CD4-positive, alpha-beta T cell (primary cell): ENCODE measurements at regions of chr3 and their contacts with region 1.

Region 1: GRCh38 chr3:30693470-30694120 is 87.2 kb downstream of the TGFBR2 start:
- DNase-seq: peak in 10 of 14 experiments; percentile 12 to 83 (median 37)
- ATAC-seq: peak; percentile 94
- H3K4me3 ChIP-seq: no peak overlapping the region
- H3K4me3 Mint-ChIP-seq: no peak overlapping the region
- H3K27ac ChIP-seq: no peak overlapping the region
- H3K27ac Mint-ChIP-seq: peak overlapping the region; percentile 79
- H3K4me1 ChIP-seq: peaks cover 19% of the 10 kb centered on the region
- H3K4me1 Mint-ChIP-seq: peaks cover 86% of the 10 kb centered on the region
- H3K27me3 ChIP-seq: no peaks in the 10 kb centered on the region
- H3K27me3 Mint-ChIP-seq: no peaks in the 10 kb centered on the region
- CTCF ChIP-seq: peak; percentile 90

Region 2: DNA sequence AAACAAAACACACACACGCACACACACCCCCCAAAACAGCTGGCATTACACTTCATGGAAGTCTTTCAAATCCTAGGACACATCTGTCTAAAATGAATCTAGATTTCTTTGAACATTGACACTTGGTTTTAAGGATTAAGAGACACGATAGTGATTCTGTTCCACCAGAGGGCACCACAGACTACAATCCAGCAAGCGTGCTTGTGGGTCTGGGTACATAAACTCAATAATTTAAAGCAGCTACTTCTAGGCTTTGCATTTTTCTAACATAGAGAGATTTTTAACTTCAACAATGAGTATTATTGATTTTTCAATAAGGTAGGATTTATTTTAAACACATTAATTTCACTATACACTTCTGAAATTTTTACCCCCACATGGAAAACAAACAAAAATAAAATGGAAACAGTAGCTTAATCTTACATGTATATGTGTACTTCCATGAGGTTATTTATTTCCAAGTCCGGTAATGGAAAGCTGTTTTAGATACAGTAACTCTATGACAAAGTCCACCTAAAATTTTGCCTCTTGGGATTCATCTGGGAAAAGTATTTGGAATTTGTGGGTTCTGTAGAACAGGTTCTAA is 651.2 kb before region 1 on chr3:
- CTCF ChIA-PET with region 1: interaction called, 5 read pairs
- POLR2A ChIA-PET with region 1: interaction called, 5 read pairs
- intact Hi-C with region 1: loop called in 1 of 2 experiments (anchors 1 kb)
- DNase-seq: peak; percentile 24 to 76 (median 48)
- ATAC-seq: peak; percentile 66
- H3K4me3 ChIP-seq: no peak overlapping the region
- H3K4me3 Mint-ChIP-seq: no peak overlapping the region
- H3K27ac ChIP-seq: no peak overlapping the region
- H3K27ac Mint-ChIP-seq: no peak overlapping the region
- H3K4me1 ChIP-seq: no peaks in the 10 kb centered on the region
- H3K4me1 Mint-ChIP-seq: peaks cover 6% of the 10 kb centered on the region
- H3K27me3 ChIP-seq: peaks cover 0 to 4% of the 10 kb centered on the region in 2 experiments
- H3K27me3 Mint-ChIP-seq: peaks cover 36% of the 10 kb centered on the region
- CTCF ChIP-seq: peak; percentile 69

Region 3: GRCh38 chr3:30199096-30199759 is 494.4 kb before region 1 on chr3:
- CTCF ChIA-PET with region 1: interaction called, 14 read pairs
- POLR2A ChIA-PET with region 1: no interaction called
- intact Hi-C with region 1: loop called (anchors 1 to 5 kb)
- DNase-seq: peak; percentile 49 to 80 (median 59)
- ATAC-seq: peak; percentile 37
- H3K4me3 ChIP-seq: no peak overlapping the region
- H3K4me3 Mint-ChIP-seq: no peak overlapping the region
- H3K27ac ChIP-seq: no peak overlapping the region
- H3K27ac Mint-ChIP-seq: no peak overlapping the region
- H3K4me1 ChIP-seq: no peaks in the 10 kb centered on the region
- H3K4me1 Mint-ChIP-seq: peaks cover 5% of the 10 kb centered on the region
- H3K27me3 ChIP-seq: no peaks in the 10 kb centered on the region
- H3K27me3 Mint-ChIP-seq: no peaks in the 10 kb centered on the region
- CTCF ChIP-seq: peak; percentile 85

Region 4: DNA sequence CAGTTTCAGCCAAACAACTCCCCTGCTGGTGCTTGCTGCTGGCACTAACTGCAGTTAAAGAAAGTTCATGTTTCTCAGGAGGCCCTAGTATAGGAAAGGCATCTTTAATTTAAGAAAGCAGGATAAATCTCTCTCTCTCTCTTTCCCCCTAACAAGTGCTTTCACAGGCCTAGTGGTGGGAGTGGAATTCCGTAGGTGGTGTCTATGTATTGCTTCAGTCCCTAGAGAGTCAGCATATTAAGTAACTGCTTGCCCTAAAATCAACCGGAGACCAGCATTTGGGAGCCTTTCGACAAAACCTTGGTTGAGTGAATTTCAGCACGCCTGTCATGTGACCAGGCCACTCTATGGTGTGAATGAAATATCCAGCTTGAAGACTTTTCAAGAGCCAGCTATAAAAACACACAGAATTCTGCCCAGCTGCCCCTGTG is 256.4 kb before region 1 on chr3:
- CTCF ChIA-PET with region 1: no interaction called
- POLR2A ChIA-PET with region 1: no interaction called
- intact Hi-C with region 1: loop called in 1 of 2 experiments (anchors 10 kb)
- DNase-seq: no peak
- ATAC-seq: no peak
- H3K4me3 ChIP-seq: no peak overlapping the region
- H3K4me3 Mint-ChIP-seq: peak overlapping the region; percentile 51
- H3K27ac ChIP-seq: no peak overlapping the region
- H3K27ac Mint-ChIP-seq: peak overlapping the region; percentile 85
- H3K4me1 ChIP-seq: no peaks in the 10 kb centered on the region
- H3K4me1 Mint-ChIP-seq: peaks cover 39% of the 10 kb centered on the region
- H3K27me3 ChIP-seq: no peaks in the 10 kb centered on the region
- H3K27me3 Mint-ChIP-seq: no peaks in the 10 kb centered on the region
- CTCF ChIP-seq: no peak

Region 5: GRCh38 chr3:30606301-30607031 is 87.1 kb before region 1 on chr3 and contains the start of gene TGFBR2:
- CTCF ChIA-PET with region 1: interaction called, 5 read pairs
- POLR2A ChIA-PET with region 1: interaction called, 17 read pairs
- intact Hi-C with region 1: no loop called
- DNase-seq: peak; percentile 61 to 91 (median 79)
- ATAC-seq: peak; percentile 62
- H3K4me3 ChIP-seq: peak within 1 kb of the TSS; percentile 73
- H3K4me3 Mint-ChIP-seq: peak within 1 kb of the TSS; percentile 99
- H3K27ac ChIP-seq: peak within 1 kb of the TSS; percentile 61 to 91
- H3K27ac Mint-ChIP-seq: peak within 1 kb of the TSS; percentile 96
- H3K4me1 ChIP-seq: peaks cover 28% of the 10 kb centered on the region
- H3K4me1 Mint-ChIP-seq: peaks cover 63% of the 10 kb centered on the region
- H3K27me3 ChIP-seq: no peaks in the 10 kb centered on the region
- H3K27me3 Mint-ChIP-seq: no peaks in the 10 kb centered on the region
- CTCF ChIP-seq: no peak
- total RNA-seq, gene TGFBR2: 203 to 205 TPM

Region 6: DNA sequence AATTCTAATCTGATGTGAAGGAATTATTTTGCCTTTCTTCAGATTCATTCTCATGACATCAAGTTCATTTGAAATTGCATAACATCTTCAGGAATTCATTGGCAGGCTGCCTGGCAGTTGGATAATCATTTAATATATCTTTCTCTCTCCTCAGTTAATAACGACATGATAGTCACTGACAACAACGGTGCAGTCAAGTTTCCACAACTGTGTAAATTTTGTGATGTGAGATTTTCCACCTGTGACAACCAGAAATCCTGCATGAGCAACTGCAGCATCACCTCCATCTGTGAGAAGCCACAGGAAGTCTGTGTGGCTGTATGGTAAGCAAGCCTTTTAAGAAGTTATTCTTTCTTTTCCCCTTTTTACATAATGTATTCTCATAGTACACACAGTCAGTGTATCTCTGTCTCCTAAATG is 49.0 kb before region 1 on chr3:
- CTCF ChIA-PET with region 1: interaction called, 5 read pairs
- POLR2A ChIA-PET with region 1: interaction called, 3 read pairs
- intact Hi-C with region 1: loop called (anchors 2 to 10 kb)
- DNase-seq: peak in 10 of 14 experiments; percentile 26 to 87 (median 50)
- ATAC-seq: peak; percentile 62
- H3K4me3 ChIP-seq: peak overlapping the region; percentile 14
- H3K4me3 Mint-ChIP-seq: peak overlapping the region; percentile 79
- H3K27ac ChIP-seq: peak overlapping the region; percentile 72 to 76
- H3K27ac Mint-ChIP-seq: peak overlapping the region; percentile 96
- H3K4me1 ChIP-seq: peaks cover 85% of the 10 kb centered on the region
- H3K4me1 Mint-ChIP-seq: peaks cover 99% of the 10 kb centered on the region
- H3K27me3 ChIP-seq: no peaks in the 10 kb centered on the region
- H3K27me3 Mint-ChIP-seq: no peaks in the 10 kb centered on the region
- CTCF ChIP-seq: no peak

Region 7: DNA sequence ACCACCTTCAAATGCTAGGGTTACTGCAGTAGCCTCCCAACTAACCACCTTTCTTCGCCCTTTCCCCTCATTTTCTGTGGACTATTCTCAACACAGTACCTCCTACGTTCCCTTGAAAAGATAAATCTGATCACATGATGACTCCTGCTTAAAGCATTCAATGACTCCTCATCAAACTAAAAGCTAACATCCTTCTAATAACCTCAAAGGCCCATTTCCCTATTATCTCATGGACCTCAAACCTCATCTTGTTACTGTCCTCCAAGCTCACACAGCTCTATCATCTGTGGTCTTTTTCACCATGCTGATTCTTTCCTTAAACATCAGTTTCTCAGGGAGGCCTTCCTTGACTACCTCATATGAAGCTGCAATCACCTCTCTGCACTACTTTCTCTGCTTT is 171.2 kb after region 1 on chr3:
- CTCF ChIA-PET with region 1: no interaction called
- POLR2A ChIA-PET with region 1: no interaction called
- intact Hi-C with region 1: no loop called
- DNase-seq: no peak
- ATAC-seq: no peak
- H3K4me3 ChIP-seq: no peak overlapping the region
- H3K4me3 Mint-ChIP-seq: no peak overlapping the region
- H3K27ac ChIP-seq: no peak overlapping the region
- H3K27ac Mint-ChIP-seq: no peak overlapping the region
- H3K4me1 ChIP-seq: no peaks in the 10 kb centered on the region
- H3K4me1 Mint-ChIP-seq: no peaks in the 10 kb centered on the region
- H3K27me3 ChIP-seq: no peaks in the 10 kb centered on the region
- H3K27me3 Mint-ChIP-seq: peaks cover 6% of the 10 kb centered on the region
- CTCF ChIP-seq: no peak

Region 8: GRCh38 chr3:31562525-31562924 is 868.9 kb after region 1 on chr3:
- CTCF ChIA-PET with region 1: no interaction called
- POLR2A ChIA-PET with region 1: no interaction called
- intact Hi-C with region 1: no loop called
- DNase-seq: peak in 12 of 14 experiments; percentile 13 to 61 (median 32)
- ATAC-seq: peak; percentile 77
- H3K4me3 ChIP-seq: no peak overlapping the region
- H3K4me3 Mint-ChIP-seq: peak overlapping the region; percentile 40
- H3K27ac ChIP-seq: no peak overlapping the region
- H3K27ac Mint-ChIP-seq: no peak overlapping the region
- H3K4me1 ChIP-seq: peaks cover 20% of the 10 kb centered on the region
- H3K4me1 Mint-ChIP-seq: peaks cover 91% of the 10 kb centered on the region
- H3K27me3 ChIP-seq: no peaks in the 10 kb centered on the region
- H3K27me3 Mint-ChIP-seq: no peaks in the 10 kb centered on the region
- CTCF ChIP-seq: no peak